Ovary (tissue), 10 donors: ENCODE measurements at regions of chr17 and their contacts with region 1.

Region 1: DNA sequence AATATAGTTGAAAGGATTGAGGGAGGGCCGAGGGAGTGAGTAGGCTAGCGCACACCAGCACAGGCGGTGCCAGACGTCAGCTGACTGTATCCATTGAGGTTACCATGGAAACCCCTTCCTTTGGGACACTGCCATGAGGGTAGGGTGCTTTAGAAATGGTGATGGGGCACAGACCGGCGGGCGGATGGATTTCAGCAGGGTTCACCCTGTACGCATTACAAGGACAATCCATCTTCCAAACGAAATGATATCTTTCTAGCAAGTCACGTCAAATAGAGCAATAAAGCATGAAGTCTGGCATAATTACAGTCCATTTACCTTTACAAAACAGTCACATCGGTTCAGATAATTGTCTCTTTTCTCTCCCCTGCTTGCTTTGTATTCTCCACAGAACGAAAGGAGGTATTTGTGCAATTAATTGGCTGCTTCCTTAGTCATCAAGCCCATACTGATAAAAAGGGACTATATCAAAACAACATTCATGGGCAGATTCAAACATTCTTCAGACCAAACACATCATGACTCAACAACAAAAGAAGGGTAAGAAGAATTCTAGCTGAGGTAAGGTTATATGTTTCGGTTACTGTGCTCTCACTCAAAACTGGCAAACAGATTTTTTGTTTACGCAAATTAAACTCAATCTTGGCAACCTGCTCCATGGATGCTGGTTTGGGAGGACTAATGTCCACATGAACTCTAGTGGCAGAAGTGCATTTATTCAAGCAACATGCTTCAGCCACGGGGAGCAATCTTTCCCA is 140.6 kb downstream of the CDK5R1 start:
- DNase-seq: peak; percentile 36 to 66 (median 53)
- H3K4me3 ChIP-seq: no peak overlapping the region
- H3K27ac ChIP-seq: no peak overlapping the region
- H3K4me1 ChIP-seq: peaks cover 4% of the 10 kb centered on the region
- H3K27me3 ChIP-seq: no peaks in the 10 kb centered on the region
- CTCF ChIP-seq: no peak
- EP300 ChIP-seq: no peak
- POLR2A ChIP-seq: no peak

Region 2: DNA sequence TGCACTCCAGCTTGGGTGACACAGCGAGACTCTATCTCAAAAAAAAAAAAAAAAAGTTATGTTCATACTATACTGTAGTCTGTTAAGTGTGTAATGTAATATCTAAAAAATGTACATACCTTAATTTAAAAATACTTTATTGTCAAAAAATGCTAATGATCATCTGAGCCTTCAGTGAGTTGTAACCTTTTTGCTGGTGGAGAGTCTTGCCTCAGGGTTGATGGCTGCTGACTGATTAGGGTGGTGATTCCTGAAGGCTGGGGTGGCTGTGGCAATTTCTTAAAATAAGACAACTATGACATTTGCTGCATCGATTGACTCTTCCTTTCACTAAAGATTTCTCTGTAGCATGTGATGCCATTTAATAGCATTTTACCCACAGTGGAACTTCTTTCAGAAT is 461.3 kb before region 1 on chr17:
- intact Hi-C with region 1: no loop called
- DNase-seq: no peak
- H3K4me3 ChIP-seq: no peak overlapping the region
- H3K27ac ChIP-seq: no peak overlapping the region
- H3K4me1 ChIP-seq: no peaks in the 10 kb centered on the region
- H3K27me3 ChIP-seq: no peaks in the 10 kb centered on the region
- CTCF ChIP-seq: no peak
- EP300 ChIP-seq: no peak
- POLR2A ChIP-seq: no peak

Region 3: DNA sequence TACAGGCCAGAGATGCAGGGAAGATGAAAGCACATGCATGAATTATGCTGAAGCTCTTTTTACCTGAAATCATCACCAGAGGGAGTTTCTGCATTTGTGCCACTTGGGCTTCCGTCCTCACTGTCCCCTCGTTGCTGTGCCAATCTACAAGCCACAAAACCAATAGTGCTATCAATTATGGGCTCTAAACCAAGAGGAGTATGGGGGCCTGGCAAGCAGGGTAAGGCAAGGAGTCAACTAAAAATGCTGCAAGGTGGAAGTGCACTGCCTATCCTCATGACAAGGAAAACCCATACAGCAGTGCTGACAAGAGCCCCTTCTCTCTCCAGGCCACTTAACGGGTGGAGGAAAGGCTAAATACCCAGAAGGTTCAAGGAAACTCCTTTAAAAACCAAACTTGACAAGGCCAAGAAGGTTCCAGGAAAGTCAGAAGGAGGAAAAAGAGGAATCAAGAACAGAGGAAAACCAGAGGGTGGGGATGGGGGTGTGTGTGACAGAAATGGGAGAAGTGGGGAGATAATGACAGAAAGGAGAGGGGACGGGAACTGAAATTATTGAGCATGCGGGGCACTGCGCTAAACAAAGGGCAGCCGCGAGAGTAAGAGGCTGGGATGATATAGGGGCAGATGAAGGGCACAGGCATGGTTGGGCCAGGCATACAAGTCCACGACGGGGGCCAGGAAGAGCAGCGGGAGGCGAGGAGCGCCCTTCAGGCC is 286.1 kb before region 1 on chr17:
- intact Hi-C with region 1: no loop called
- DNase-seq: no peak
- H3K4me3 ChIP-seq: peak overlapping the region; percentile 72
- H3K27ac ChIP-seq: peak overlapping the region; percentile 79 to 82
- H3K4me1 ChIP-seq: peaks cover 3% of the 10 kb centered on the region
- H3K27me3 ChIP-seq: no peaks in the 10 kb centered on the region
- CTCF ChIP-seq: no peak
- EP300 ChIP-seq: no peak
- POLR2A ChIP-seq: no peak

Region 4: DNA sequence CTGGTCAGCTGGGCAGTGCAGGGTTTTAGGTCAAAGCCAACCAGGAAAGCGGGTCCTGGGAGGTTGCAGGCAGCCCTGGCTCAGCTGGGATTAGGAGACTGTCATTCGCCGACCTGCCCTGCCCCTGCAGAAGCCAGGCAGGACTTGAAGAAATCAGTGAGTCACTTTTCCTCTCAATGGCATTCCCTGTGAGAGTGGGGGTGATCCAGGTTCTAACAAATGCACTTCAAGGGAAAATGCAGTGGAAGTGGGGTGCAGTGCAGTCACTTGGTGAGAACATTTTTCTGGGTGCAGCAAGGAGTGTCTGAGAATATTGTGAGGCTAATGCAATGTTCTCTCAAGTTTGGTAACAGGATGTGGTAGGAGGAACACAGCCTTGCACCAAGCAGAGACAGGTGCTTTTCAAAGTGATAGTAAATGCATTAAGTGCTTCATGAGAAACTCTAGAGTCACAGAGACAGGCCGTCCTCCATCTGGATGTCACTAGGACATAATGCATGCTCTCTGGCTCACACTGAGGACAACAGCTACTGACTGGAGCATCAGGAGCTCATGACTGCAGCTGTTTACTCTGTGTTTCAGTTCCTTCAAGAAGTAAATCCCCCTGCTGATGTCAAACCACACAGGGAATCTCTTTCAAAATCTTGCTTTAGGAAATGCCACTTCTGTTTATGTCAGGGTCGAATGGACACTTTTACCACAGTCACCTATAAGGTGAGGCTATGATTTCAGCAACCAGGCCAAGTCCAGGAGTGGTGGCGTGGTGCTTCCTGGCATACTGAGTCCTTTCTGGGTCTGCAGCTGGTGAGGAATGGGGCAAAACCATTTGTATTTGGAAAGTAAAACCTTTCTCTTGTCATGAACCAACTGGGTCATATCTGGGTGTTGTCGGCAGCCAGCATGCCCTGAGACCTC is 123.9 kb before region 1 on chr17:
- intact Hi-C with region 1: loop called in 1 of 4 experiments (anchors 10 kb)
- DNase-seq: no peak
- H3K4me3 ChIP-seq: no peak overlapping the region
- H3K27ac ChIP-seq: no peak overlapping the region
- H3K4me1 ChIP-seq: no peaks in the 10 kb centered on the region
- H3K27me3 ChIP-seq: no peaks in the 10 kb centered on the region
- CTCF ChIP-seq: no peak
- EP300 ChIP-seq: no peak
- POLR2A ChIP-seq: no peak

Region 5: DNA sequence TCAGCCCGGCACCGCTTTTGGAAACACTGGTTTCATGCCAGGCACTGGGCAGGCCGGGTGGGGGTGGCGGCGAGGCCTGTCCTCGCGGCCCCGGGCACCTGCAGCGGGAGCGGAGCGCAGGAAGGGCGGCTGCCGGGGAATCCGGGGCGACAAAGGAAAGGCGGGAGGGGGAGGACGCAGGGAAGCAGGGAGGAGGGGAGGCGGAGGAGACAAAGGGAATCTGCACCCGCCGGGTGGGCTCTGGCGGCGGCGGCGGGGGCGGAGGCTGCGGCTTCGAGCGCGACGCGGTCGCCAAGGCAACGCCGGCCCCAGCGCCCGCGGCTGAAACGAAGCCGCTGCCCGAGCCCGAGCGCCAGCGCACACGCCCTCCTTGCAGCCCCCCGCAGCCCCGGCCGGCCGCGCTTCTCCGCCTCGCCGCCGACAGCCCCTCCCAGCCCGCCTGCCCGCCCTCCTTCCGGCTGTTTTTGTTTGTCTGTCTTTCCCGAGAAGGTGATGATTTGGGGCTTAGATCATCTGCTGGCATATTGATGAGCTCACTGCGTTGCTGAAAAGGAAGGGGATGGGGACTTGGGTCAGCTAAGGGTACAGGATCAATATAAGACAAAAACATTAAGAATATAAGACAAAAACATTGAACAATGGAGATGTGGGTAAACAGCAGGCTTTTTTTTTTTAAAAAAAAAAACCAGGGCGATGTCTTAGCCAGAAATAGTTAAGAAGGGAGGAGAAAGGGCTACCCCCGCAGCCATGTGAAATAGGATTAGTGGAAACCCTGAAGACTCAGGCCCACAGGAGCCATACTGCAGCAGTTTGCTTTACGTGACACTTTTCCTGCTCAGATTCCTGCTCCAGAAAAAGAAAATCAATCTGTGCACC is 108.0 kb before region 1 on chr17:
- intact Hi-C with region 1: loop called in 1 of 4 experiments (anchors 10 kb)
- DNase-seq: peak in 4 of 5 donors; percentile 35 to 68 (median 46)
- H3K4me3 ChIP-seq: peak overlapping the region; percentile 47
- H3K27ac ChIP-seq: no peak overlapping the region
- H3K4me1 ChIP-seq: no peaks in the 10 kb centered on the region
- H3K27me3 ChIP-seq: no peaks in the 10 kb centered on the region
- CTCF ChIP-seq: no peak
- EP300 ChIP-seq: no peak
- POLR2A ChIP-seq: no peak

Region 6: GRCh38 chr17:32569171-32570080 is 58.0 kb before region 1 on chr17:
- intact Hi-C with region 1: loop called in 1 of 4 experiments (anchors 10 kb)
- DNase-seq: no peak
- H3K4me3 ChIP-seq: no peak overlapping the region
- H3K27ac ChIP-seq: no peak overlapping the region
- H3K4me1 ChIP-seq: no peaks in the 10 kb centered on the region
- H3K27me3 ChIP-seq: no peaks in the 10 kb centered on the region
- CTCF ChIP-seq: no peak
- EP300 ChIP-seq: no peak
- POLR2A ChIP-seq: no peak

Region 7: GRCh38 chr17:32723310-32723955 is 96.0 kb after region 1 on chr17:
- intact Hi-C with region 1: no loop called
- DNase-seq: no peak
- H3K4me3 ChIP-seq: no peak overlapping the region
- H3K27ac ChIP-seq: no peak overlapping the region
- H3K4me1 ChIP-seq: no peaks in the 10 kb centered on the region
- H3K27me3 ChIP-seq: no peaks in the 10 kb centered on the region
- CTCF ChIP-seq: no peak
- EP300 ChIP-seq: no peak
- POLR2A ChIP-seq: no peak